ENCODE measurements at regions of chr4 and their contacts with region 1.

Region 1: GRCh38 chr4:121307445-121308327 is 73.1 kb downstream of the QRFPR start:
- DNase-seq: peak; percentile 53
- H3K4me3 Mint-ChIP-seq: no peak overlapping the region
- H3K27ac Mint-ChIP-seq: no peak overlapping the region
- H3K4me1 Mint-ChIP-seq: peaks cover 23% of the 10 kb centered on the region
- H3K27me3 Mint-ChIP-seq: peaks cover 3% of the 10 kb centered on the region

Region 2: DNA sequence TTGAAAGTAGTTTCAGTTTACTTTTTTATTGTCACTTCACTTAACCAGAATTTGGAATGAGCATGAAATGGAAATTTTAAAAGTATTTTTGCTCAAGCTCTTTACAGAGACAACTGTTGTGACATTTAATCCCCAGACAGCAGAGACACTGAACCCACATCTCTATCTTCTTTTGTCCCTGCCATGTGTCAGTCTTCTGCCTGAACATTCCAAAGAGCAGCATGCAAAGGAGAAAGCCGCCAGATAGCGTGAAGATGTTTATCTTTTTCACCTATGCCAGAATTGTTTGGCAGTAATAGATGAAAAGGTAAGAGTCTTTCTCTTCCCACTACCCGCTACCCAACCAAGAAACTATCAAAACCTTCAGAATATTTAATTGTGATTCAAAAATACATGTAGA is 282.1 kb before region 1 on chr4:
- CTCF ChIA-PET with region 1: no interaction called
- POLR2A ChIA-PET with region 1: no interaction called
- DNase-seq: no peak
- H3K4me3 Mint-ChIP-seq: no peak overlapping the region
- H3K27ac Mint-ChIP-seq: no peak overlapping the region
- H3K4me1 Mint-ChIP-seq: no peaks in the 10 kb centered on the region
- H3K27me3 Mint-ChIP-seq: peaks cover 18% of the 10 kb centered on the region

Region 3: GRCh38 chr4:121199742-121200561 is 107.7 kb before region 1 on chr4:
- CTCF ChIA-PET with region 1: interaction called, 23 read pairs
- POLR2A ChIA-PET with region 1: no interaction called
- DNase-seq: peak; percentile 50
- H3K4me3 Mint-ChIP-seq: peak overlapping the region; percentile 5
- H3K27ac Mint-ChIP-seq: peak overlapping the region; percentile 23
- H3K4me1 Mint-ChIP-seq: peaks cover 24% of the 10 kb centered on the region
- H3K27me3 Mint-ChIP-seq: peaks cover 1% of the 10 kb centered on the region

Region 4: GRCh38 chr4:121272526-121272925 is 35.2 kb before region 1 on chr4:
- CTCF ChIA-PET with region 1: interaction called, 22 read pairs
- POLR2A ChIA-PET with region 1: interaction called, 4 read pairs
- DNase-seq: no peak
- H3K4me3 Mint-ChIP-seq: no peak overlapping the region
- H3K27ac Mint-ChIP-seq: peak overlapping the region; percentile 6
- H3K4me1 Mint-ChIP-seq: peaks cover 12% of the 10 kb centered on the region
- H3K27me3 Mint-ChIP-seq: no peaks in the 10 kb centered on the region

Region 5: GRCh38 chr4:121582296-121582695 is 274.6 kb after region 1 on chr4:
- CTCF ChIA-PET with region 1: no interaction called
- POLR2A ChIA-PET with region 1: no interaction called
- DNase-seq: no peak
- H3K4me3 Mint-ChIP-seq: no peak overlapping the region
- H3K27ac Mint-ChIP-seq: no peak overlapping the region
- H3K4me1 Mint-ChIP-seq: no peaks in the 10 kb centered on the region
- H3K27me3 Mint-ChIP-seq: peaks cover 52% of the 10 kb centered on the region

Measured in activated CD4-positive, alpha-beta memory T cell treated with anti-CD3 and anti-CD28 coated beads, Interleukin-2, amount 10 ng/mL, durations not matched to agents 7 days and 5 days (primary cell).